Aorta (tissue), 5 donors: ENCODE measurements at regions of chr17 and their contacts with region 1.

Region 1: GRCh38 chr17:66165513-66166123 is 26.3 kb downstream of the CEP112 start:
- DNase-seq: no peak
- ATAC-seq: no peak
- H3K4me3 ChIP-seq: no peak overlapping the region
- H3K27ac ChIP-seq: no peak overlapping the region
- H3K4me1 ChIP-seq: no peaks in the 10 kb centered on the region
- H3K27me3 ChIP-seq: no peaks in the 10 kb centered on the region

Region 2: DNA sequence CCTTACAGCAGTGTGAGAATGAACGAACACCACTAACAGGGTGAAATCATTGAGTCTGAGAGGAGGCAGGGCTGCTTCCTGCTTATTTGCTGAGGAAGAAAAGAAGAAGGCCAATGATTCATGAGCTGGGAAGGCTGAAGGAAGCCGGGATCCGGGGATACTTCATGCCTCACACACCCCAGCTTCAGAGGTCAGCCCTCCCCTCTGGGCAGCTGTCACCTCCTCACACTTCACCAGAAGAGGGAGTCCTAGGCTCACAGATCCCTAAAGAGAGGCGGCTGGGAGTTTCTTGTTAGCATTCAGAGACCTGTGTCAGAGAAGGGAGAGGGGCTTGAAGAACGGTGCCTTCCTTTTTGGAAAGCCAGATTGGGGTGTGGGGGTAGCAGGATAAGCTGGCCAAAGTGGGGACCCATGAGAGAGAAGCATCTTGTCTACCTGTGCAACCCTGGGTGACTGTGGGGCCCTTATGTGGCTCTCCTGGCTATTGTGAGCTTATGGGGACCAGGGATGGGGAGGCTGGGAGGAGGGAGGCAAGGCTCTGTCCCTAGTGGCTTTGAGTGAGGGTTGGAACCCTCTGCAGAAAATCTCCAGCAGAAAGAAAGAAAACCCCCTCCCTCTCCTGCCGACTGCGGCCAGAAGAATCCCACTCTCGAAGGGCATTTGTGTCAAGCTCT is 933.8 kb before region 1 on chr17:
- intact Hi-C with region 1: loop called in 1 of 2 experiments (anchors 5 kb)
- DNase-seq: no peak
- ATAC-seq: no peak
- H3K4me3 ChIP-seq: no peak overlapping the region
- H3K27ac ChIP-seq: no peak overlapping the region
- H3K4me1 ChIP-seq: no peaks in the 10 kb centered on the region
- H3K27me3 ChIP-seq: no peaks in the 10 kb centered on the region

Region 3: GRCh38 chr17:65455972-65456343 is 709.7 kb before region 1 on chr17:
- intact Hi-C with region 1: loop called in 1 of 2 experiments (anchors 5 kb)
- DNase-seq: no peak
- ATAC-seq: no peak
- H3K4me3 ChIP-seq: no peak overlapping the region
- H3K27ac ChIP-seq: no peak overlapping the region
- H3K4me1 ChIP-seq: no peaks in the 10 kb centered on the region
- H3K27me3 ChIP-seq: no peaks in the 10 kb centered on the region

Region 4: DNA sequence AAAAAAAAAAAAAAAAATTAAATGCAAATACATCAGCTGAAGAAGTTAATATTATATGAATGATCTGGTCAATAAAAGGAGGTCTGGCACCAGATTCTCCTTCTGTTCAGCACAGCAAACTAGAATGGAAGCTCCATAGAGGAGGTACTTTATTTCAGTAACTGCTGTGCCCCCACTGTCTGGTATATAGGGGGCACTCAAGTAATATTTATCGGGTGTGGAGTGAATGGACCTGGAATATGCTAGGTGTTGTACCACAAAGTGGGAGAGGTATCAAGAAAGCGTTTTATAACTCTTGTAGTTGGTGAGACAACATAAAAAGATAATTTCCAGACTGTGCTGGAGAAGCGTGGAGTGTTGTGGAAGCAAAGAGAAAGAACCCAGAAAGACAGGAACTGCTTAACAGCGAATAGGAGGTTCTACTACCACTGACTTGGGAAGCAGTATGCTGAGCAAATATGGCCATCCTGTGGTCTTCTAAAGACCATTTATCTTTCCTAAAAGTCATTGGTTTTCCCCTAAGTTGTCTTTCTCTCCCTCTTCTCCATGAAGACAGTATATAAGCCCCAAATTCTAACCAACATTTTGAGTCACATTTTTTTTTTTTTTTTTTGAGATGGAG is 124.6 kb after region 1 on chr17:
- intact Hi-C with region 1: no loop called
- DNase-seq: no peak
- ATAC-seq: no peak
- H3K4me3 ChIP-seq: no peak overlapping the region
- H3K27ac ChIP-seq: no peak overlapping the region
- H3K4me1 ChIP-seq: no peaks in the 10 kb centered on the region
- H3K27me3 ChIP-seq: no peaks in the 10 kb centered on the region